Dorsolateral prefrontal cortex (tissue), 120 donors: ENCODE measurements at regions of chr2 and their contacts with region 1.

Region 1: DNA sequence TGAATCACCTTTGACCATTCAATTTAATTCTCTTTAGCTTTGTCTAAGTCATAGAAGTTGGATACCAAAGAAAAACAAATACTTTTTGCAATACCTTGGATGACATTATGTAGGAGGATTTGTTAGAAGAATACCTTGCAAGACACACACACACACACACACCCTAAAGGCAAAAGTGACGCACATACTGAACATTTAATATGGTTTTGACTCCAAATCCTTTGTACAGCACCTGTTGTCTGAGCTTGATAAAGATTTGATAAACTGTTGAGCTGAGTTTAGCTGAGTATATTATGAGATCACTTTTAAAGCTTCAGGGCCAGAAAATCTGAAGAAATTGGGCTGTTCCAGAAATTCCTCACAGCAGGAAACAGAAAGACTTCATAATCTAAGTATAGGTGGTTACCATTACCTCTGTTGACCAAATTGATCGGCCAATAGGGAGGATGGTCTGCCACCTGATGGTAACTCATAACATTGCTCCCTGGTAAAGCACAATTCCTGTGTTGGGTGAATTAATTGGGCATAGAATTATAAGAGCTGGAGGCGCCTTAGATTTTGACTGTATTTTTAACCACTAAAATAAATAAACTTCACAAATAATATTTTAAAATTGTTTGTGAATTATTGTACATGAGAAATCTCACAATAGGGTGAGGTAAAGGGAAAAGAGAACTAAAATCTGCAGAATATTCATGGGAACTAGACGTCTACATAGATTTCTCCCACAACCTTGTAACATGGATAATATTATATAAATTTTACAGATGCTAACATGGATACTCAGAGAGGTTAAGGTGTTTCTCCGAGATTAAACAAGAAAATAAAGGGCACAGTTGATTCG is 21.9 kb upstream of the RPIA start:
- DNase-seq: no peak
- H3K4me3 ChIP-seq: no peak overlapping the region
- H3K27ac ChIP-seq: no peak overlapping the region
- H3K27me3 ChIP-seq: no peaks in the 10 kb centered on the region
- CTCF ChIP-seq: peak in 55 of 56 donors; percentile 24 to 67 (median 50)

Region 2: DNA sequence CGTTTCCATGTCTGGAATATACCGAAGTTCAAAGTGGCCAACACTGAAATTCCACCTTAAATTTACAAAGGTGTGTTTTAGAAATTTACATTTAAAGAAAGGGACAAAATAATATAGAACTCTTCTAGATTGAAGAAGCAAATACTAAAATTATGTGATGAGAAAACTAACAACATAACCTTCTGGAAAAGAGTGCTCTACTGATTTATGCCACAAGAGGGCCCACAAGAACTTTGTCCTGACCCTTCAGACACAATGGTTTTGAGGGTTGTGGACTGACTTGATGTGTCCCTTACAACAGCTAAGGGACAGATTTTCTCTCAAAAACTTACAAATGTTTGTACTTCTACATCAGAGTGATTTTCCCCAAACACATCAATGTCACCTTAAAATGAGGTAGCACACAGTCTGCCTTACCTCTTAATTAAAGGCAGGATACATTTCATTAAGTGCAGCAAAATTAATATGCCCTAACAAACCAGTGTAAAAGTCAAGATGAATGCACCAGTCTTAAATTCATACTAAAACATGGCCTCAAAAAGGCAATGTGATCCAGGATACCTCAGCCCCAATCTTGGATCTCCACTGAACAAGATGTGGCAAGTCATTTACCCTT is 78.5 kb before region 1 on chr2:
- intact Hi-C with region 1: loop called (anchors 1 to 5 kb)
- DNase-seq: peak in 3 of 10 donors; percentile 11 to 38 (median 24)
- H3K4me3 ChIP-seq: no peak overlapping the region
- H3K27ac ChIP-seq: peak overlapping the region in 2 of 59 donors; percentile 30 to 43
- H3K27me3 ChIP-seq: no peaks in the 10 kb centered on the region
- CTCF ChIP-seq: peak; percentile 62 to 92 (median 81)

Region 3: GRCh38 chr2:88614497-88615157 is 55.0 kb before region 1 on chr2:
- intact Hi-C with region 1: loop called in 1 of 2 experiments (anchors 10 kb)
- DNase-seq: no peak
- H3K4me3 ChIP-seq: no peak overlapping the region
- H3K27ac ChIP-seq: peak overlapping the region in 1 of 59 donors; percentile 10
- H3K27me3 ChIP-seq: no peaks in the 10 kb centered on the region
- CTCF ChIP-seq: no peak